IMR-90 (cell line): ENCODE measurements at regions of chr19 and their contacts with region 1.

Region 1: GRCh38 chr19:19732579-19733501 is at the start of gene ZNF14:
- DNase-seq: peak; percentile 90
- ATAC-seq: peak; percentile 100
- H3K4me3 ChIP-seq: peak within 1 kb of the TSS; percentile 95
- H3K27ac ChIP-seq: peak within 1 kb of the TSS; percentile 75
- H3K4me1 ChIP-seq: no peaks in the 10 kb centered on the region
- H3K27me3 ChIP-seq: no peaks in the 10 kb centered on the region
- CTCF ChIP-seq: 0 out of 2 replicates have a peak, but pooled peaks have one; percentile 6
- POLR2A ChIP-seq: no peak
- RAD21 ChIP-seq: no peak
- total RNA-seq, gene ZNF14: 5.4 and 5.6 TPM in 2 replicates

Region 2: GRCh38 chr19:19591133-19591825 is 141.6 kb before region 1 on chr19:
- CTCF ChIA-PET with region 1: no interaction called
- POLR2A ChIA-PET with region 1: no interaction called
- dilution Hi-C with region 1: no loop called
- in situ Hi-C with region 1: no loop called
- intact Hi-C with region 1: no loop called
- DNase-seq: peak; percentile 99
- ATAC-seq: peak; percentile 92
- H3K4me3 ChIP-seq: no peak overlapping the region
- H3K27ac ChIP-seq: peak overlapping the region; percentile 80
- H3K4me1 ChIP-seq: peaks cover 19% of the 10 kb centered on the region
- H3K27me3 ChIP-seq: no peaks in the 10 kb centered on the region
- CTCF ChIP-seq: no peak
- POLR2A ChIP-seq: no peak
- RAD21 ChIP-seq: no peak

Region 3: GRCh38 chr19:19719798-19720197 is 13.0 kb before region 1 on chr19:
- CTCF ChIA-PET with region 1: no interaction called
- POLR2A ChIA-PET with region 1: interaction called, 16 read pairs
- dilution Hi-C with region 1: no loop called
- in situ Hi-C with region 1: no loop called
- intact Hi-C with region 1: no loop called
- DNase-seq: no peak
- ATAC-seq: no peak
- H3K4me3 ChIP-seq: no peak overlapping the region
- H3K27ac ChIP-seq: no peak overlapping the region
- H3K4me1 ChIP-seq: no peaks in the 10 kb centered on the region
- H3K27me3 ChIP-seq: no peaks in the 10 kb centered on the region
- CTCF ChIP-seq: no peak
- POLR2A ChIP-seq: no peak
- RAD21 ChIP-seq: no peak

Region 4: GRCh38 chr19:19776041-19777008 is 43.5 kb after region 1 on chr19:
- CTCF ChIA-PET with region 1: no interaction called
- POLR2A ChIA-PET with region 1: no interaction called
- dilution Hi-C with region 1: no loop called
- in situ Hi-C with region 1: no loop called
- intact Hi-C with region 1: loop called (anchors 2 kb)
- DNase-seq: peak; percentile 98
- ATAC-seq: peak; percentile 99
- H3K4me3 ChIP-seq: peak overlapping the region; percentile 73
- H3K27ac ChIP-seq: peak overlapping the region; percentile 82
- H3K4me1 ChIP-seq: 0 out of 2 replicates have a peak, but pooled peaks cover 2% of the 10 kb centered on the region
- H3K27me3 ChIP-seq: no peaks in the 10 kb centered on the region
- CTCF ChIP-seq: no peak
- POLR2A ChIP-seq: no peak
- RAD21 ChIP-seq: no peak